Esophagus muscularis mucosa (tissue), 4 donors: ENCODE measurements at regions of chr10 and their contacts with region 1.

Region 1: DNA sequence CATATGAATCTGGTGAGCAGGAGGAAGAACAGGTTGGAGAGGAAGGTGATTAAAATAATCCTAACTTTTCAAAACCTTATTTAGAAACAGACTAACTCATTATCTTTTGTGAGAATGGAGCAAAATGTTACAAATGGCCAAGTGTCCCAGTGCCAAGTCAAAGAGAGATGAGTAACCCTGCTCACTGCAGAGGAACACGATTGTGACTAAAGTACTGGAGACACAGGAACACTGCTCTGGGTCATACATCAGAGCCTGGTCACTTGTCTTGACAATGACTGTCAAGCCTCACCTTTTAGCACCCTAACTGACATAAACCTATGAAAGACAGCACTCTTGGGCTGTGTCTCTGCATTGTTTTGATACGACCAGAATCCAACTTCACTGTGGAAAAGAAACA is 108.8 kb downstream of the SGMS1 start:
- DNase-seq: no peak
- H3K4me3 ChIP-seq: no peak overlapping the region
- H3K27ac ChIP-seq: no peak overlapping the region
- H3K4me1 ChIP-seq: peaks cover 33 to 69% (median 56%) of the 10 kb centered on the region in 4 donors
- H3K27me3 ChIP-seq: no peaks in the 10 kb centered on the region
- CTCF ChIP-seq: no peak
- EP300 ChIP-seq: no peak
- POLR2A ChIP-seq: no peak

Region 2: GRCh38 chr10:50470345-50470744 is 44.6 kb before region 1 on chr10:
- intact Hi-C with region 1: no loop called
- DNase-seq: no peak
- H3K4me3 ChIP-seq: no peak overlapping the region
- H3K27ac ChIP-seq: no peak overlapping the region
- H3K4me1 ChIP-seq: peaks cover 21 to 40% (median 28%) of the 10 kb centered on the region in 4 donors
- H3K27me3 ChIP-seq: no peaks in the 10 kb centered on the region
- CTCF ChIP-seq: no peak
- EP300 ChIP-seq: no peak
- POLR2A ChIP-seq: no peak

Region 3: GRCh38 chr10:50614444-50615137 is 99.6 kb after region 1 on chr10:
- intact Hi-C with region 1: no loop called
- DNase-seq: no peak
- H3K4me3 ChIP-seq: no peak overlapping the region
- H3K27ac ChIP-seq: no peak overlapping the region
- H3K4me1 ChIP-seq: peaks cover 31 to 85% (median 48%) of the 10 kb centered on the region in 4 donors
- H3K27me3 ChIP-seq: no peaks in the 10 kb centered on the region
- CTCF ChIP-seq: peak in 1 of 3 experiments; percentile 6
- EP300 ChIP-seq: no peak
- POLR2A ChIP-seq: no peak

Region 4: DNA sequence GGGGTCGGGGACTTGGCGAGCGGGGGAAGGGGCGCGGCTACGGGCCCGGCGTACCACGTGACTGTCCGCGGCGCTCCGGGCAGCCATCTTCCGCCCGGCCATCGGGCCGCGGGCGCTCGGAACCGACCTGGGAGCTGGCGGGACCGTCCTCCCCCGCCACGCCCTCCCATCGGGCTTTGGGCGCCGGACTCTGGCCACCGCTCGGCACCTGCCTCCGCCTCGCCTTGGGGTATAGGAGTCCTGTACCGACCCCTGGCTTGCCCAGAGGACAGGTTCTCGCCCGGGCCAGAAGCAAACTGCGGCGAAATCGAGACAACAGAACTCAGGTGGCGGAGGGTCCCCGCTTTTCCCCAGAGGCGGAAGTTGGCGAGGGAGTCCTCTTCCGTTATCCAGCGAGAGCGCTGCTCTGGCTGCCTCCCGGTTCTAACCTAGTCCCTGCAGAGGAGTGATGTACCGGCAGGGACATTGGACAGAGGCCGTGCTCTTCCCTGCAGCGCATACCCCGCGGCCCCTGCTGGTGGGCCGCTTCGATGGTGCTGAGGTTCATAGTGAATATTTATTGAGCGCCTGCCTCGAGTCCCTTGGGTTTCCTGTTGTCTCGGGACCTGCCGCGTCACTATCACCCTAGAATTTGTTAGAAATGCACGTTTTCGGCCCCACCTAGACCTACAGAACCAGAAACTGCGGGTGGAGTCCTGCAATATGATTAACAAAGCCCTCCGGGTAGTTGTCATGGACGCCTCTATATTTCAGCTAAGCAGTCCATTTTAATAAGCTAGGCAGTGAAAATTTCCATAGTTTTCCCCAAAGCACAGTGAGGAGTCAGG is 110.1 kb after region 1 on chr10:
- intact Hi-C with region 1: loop called (anchors 5 kb)
- DNase-seq: peak; percentile 93
- H3K4me3 ChIP-seq: peak overlapping the region; percentile 74 to 89 (median 84)
- H3K27ac ChIP-seq: peak overlapping the region; percentile 96 to 98 (median 98)
- H3K4me1 ChIP-seq: peaks cover 21 to 36% (median 31%) of the 10 kb centered on the region in 4 donors
- H3K27me3 ChIP-seq: no peaks in the 10 kb centered on the region
- CTCF ChIP-seq: peak; percentile 60 to 68 (median 61)
- EP300 ChIP-seq: no peak
- POLR2A ChIP-seq: no peak